ENCODE measurements at regions of chr20 and their contacts with region 1.

Region 1: GRCh38 chr20:17898548-17898994 is 70.0 kb downstream of the SNX5 start:
- DNase-seq: peak; percentile 34 to 79 (median 63)
- ATAC-seq: peak; percentile 85
- H3K4me3 ChIP-seq: no peak overlapping the region
- H3K4me3 Mint-ChIP-seq: no peak overlapping the region
- H3K27ac ChIP-seq: no peak overlapping the region
- H3K27ac Mint-ChIP-seq: no peak overlapping the region
- H3K4me1 ChIP-seq: peaks cover 4% of the 10 kb centered on the region
- H3K4me1 Mint-ChIP-seq: peaks cover 5% of the 10 kb centered on the region
- H3K27me3 ChIP-seq: peaks cover 0 to 4% of the 10 kb centered on the region in 2 experiments
- H3K27me3 Mint-ChIP-seq: peaks cover 20% of the 10 kb centered on the region
- CTCF ChIP-seq: peak; percentile 93

Region 2: DNA sequence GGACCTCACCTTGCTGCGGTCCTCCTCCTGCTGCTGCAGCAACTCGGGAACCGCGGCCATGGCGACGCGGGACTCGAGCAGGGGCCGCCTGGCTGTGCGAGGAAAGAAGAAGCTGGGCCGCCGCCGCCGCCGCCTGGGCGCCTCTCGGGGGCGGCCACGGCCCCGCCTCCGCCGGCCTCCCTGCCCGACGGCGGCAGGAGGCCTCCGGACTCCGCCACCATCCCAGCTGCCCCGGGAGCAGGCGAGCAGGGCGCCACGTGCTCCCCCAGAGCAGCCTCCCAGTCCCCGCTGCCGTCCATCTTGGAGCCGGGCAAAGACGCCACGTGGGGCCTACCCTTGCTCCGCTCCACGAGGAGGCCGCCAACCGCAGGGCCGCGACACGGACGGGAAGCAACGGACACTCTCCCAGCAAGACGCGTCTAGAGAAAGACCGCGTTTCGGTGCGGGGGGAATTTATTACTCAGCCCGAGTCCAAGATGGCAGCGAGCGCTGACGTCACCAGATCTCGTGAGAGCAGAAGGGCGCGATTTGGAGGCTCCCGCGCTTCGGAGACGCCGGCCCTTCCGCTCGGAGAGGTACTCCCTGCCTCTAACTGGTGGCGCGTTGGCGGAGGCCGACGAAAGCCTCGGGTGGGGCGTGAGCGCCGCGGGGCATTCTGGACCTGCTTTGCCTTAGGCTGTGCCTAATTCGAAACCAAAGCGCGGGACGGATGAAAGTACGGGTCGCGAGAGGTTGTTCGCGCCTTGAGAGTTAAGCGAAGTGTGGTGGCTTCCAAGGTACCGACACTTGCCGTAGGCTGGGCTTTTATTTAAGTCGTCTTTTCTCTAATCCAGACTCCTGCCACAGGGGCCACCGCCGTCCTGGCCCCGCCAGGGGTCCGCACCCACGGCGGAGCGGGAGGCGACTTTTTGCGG is 70.1 kb after region 1 on chr20 and contains the starts of genes MGME1 and SNX5:
- CTCF ChIA-PET with region 1: no interaction called
- POLR2A ChIA-PET with region 1: no interaction called
- intact Hi-C with region 1: no loop called
- DNase-seq: peak; percentile 97 to 99 (median 98)
- ATAC-seq: peak; percentile 89
- H3K4me3 ChIP-seq: peak within 1 kb of the TSS; percentile 91 to 99
- H3K4me3 Mint-ChIP-seq: peak within 1 kb of the TSS; percentile 97
- H3K27ac ChIP-seq: peak within 1 kb of the TSS; percentile 91 to 99
- H3K27ac Mint-ChIP-seq: peak within 1 kb of the TSS; percentile 98
- H3K4me1 ChIP-seq: peaks cover 63% of the 10 kb centered on the region
- H3K4me1 Mint-ChIP-seq: peaks cover 78% of the 10 kb centered on the region
- H3K27me3 ChIP-seq: no peaks in the 10 kb centered on the region
- H3K27me3 Mint-ChIP-seq: no peaks in the 10 kb centered on the region
- CTCF ChIP-seq: no peak
- total RNA-seq, gene MGME1: 4.5 to 4.7 TPM
- total RNA-seq, gene SNX5: 47.3 to 52.0 TPM

Region 3: GRCh38 chr20:17995967-17996819 is 97.6 kb after region 1 on chr20:
- CTCF ChIA-PET with region 1: interaction called, 8 read pairs
- POLR2A ChIA-PET with region 1: no interaction called
- intact Hi-C with region 1: loop called (anchors 1 to 5 kb)
- DNase-seq: peak in 6 of 9 experiments; percentile 11 to 78 (median 38)
- ATAC-seq: peak; percentile 97
- H3K4me3 ChIP-seq: no peak overlapping the region
- H3K4me3 Mint-ChIP-seq: no peak overlapping the region
- H3K27ac ChIP-seq: no peak overlapping the region
- H3K27ac Mint-ChIP-seq: no peak overlapping the region
- H3K4me1 ChIP-seq: no peaks in the 10 kb centered on the region
- H3K4me1 Mint-ChIP-seq: peaks cover 9% of the 10 kb centered on the region
- H3K27me3 ChIP-seq: no peaks in the 10 kb centered on the region
- H3K27me3 Mint-ChIP-seq: peaks cover 19% of the 10 kb centered on the region
- CTCF ChIP-seq: peak; percentile 97

Region 4: GRCh38 chr20:18001131-18001921 is 102.8 kb after region 1 on chr20:
- CTCF ChIA-PET with region 1: interaction called, 8 read pairs
- POLR2A ChIA-PET with region 1: no interaction called
- intact Hi-C with region 1: loop called (anchors 1 to 5 kb)
- DNase-seq: no peak
- ATAC-seq: no peak
- H3K4me3 ChIP-seq: no peak overlapping the region
- H3K4me3 Mint-ChIP-seq: no peak overlapping the region
- H3K27ac ChIP-seq: no peak overlapping the region
- H3K27ac Mint-ChIP-seq: no peak overlapping the region
- H3K4me1 ChIP-seq: no peaks in the 10 kb centered on the region
- H3K4me1 Mint-ChIP-seq: no peaks in the 10 kb centered on the region
- H3K27me3 ChIP-seq: no peaks in the 10 kb centered on the region
- H3K27me3 Mint-ChIP-seq: peaks cover 9% of the 10 kb centered on the region
- CTCF ChIP-seq: no peak

Region 5: DNA sequence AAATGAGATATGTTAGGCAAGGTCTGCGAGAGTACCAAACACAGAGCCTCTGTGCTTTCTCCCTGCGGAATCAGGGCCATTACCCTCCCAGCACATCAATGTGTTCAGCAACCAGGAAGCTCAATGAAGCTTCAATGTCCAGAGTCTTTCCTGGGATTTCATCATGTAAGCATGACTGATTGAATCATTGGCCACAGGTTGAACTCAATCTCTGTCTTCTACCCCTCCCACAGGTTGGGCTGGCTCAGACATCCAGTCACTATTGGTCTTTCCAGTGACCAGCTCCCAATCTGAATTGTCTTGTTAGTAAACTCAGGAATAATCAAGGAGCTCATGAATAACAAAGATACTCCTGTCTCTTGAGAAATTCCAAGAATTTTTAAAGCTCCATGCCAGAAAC is 686.6 kb after region 1 on chr20:
- CTCF ChIA-PET with region 1: no interaction called
- POLR2A ChIA-PET with region 1: no interaction called
- intact Hi-C with region 1: no loop called
- DNase-seq: no peak
- ATAC-seq: no peak
- H3K4me3 ChIP-seq: no peak overlapping the region
- H3K4me3 Mint-ChIP-seq: no peak overlapping the region
- H3K27ac ChIP-seq: no peak overlapping the region
- H3K27ac Mint-ChIP-seq: no peak overlapping the region
- H3K4me1 ChIP-seq: peaks cover 18% of the 10 kb centered on the region
- H3K4me1 Mint-ChIP-seq: peaks cover 22% of the 10 kb centered on the region
- H3K27me3 ChIP-seq: no peaks in the 10 kb centered on the region
- H3K27me3 Mint-ChIP-seq: peaks cover 6% of the 10 kb centered on the region
- CTCF ChIP-seq: no peak

Region 6: DNA sequence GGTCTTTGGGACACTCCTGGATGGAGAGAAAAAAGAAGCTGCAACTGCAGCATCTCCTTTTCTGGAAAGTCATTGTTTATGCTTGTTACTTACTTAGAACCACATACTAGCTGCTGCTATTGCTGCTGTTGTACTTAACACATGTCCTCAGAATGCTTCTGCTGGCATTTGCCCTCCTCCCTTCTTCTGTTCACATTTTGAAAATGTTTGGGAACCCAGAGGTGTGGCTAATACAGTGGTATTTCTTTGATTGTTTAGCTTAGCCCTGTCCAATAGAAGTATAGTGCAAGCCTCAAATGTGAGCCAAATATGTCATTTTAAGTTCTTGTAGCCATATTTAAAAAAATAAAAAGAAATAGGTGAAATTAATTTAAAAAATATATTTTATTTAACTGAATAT is 697.7 kb after region 1 on chr20:
- CTCF ChIA-PET with region 1: no interaction called
- POLR2A ChIA-PET with region 1: no interaction called
- intact Hi-C with region 1: no loop called
- DNase-seq: no peak
- ATAC-seq: no peak
- H3K4me3 ChIP-seq: no peak overlapping the region
- H3K4me3 Mint-ChIP-seq: no peak overlapping the region
- H3K27ac ChIP-seq: no peak overlapping the region
- H3K27ac Mint-ChIP-seq: no peak overlapping the region
- H3K4me1 ChIP-seq: no peaks in the 10 kb centered on the region
- H3K4me1 Mint-ChIP-seq: peaks cover 2% of the 10 kb centered on the region
- H3K27me3 ChIP-seq: no peaks in the 10 kb centered on the region
- H3K27me3 Mint-ChIP-seq: no peaks in the 10 kb centered on the region
- CTCF ChIP-seq: no peak